Heart right ventricle (tissue), 16 donors: ENCODE measurements at regions of chr6 and their contacts with region 1.

Region 1: DNA sequence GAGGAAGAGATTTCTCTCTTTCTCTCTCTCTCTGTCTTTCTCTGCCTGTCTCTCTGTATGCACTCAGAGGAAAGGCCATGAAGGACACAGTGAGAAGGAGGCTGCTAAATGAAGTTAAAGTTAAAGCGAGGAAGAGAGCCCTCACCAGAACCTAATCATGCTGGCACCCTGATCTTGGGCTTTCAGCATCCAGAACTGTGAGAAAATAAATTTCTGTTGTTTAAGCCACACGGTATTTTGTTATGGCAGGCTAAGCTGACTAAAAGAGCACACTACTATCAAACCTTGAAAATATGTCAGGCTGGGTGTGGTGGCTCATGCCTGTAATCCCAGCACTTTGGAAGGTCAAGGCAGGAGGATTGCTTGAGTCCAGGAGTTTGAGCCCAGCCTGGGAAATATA is 8.0 kb upstream of the TCF21 start:
- DNase-seq: no peak
- ATAC-seq: no peak
- H3K4me3 ChIP-seq: no peak overlapping the region
- H3K27ac ChIP-seq: no peak overlapping the region
- H3K4me1 ChIP-seq: peaks cover 0 to 3% (median 0%) of the 10 kb centered on the region in 9 donors
- H3K27me3 ChIP-seq: peaks cover 0 to 61% (median 30%) of the 10 kb centered on the region in 7 donors
- CTCF ChIP-seq: no peak

Region 2: GRCh38 chr6:133804263-133804662 is 76.6 kb before region 1 on chr6:
- intact Hi-C with region 1: loop called in 1 of 10 experiments (anchors 2 kb)
- DNase-seq: peak in 1 of 2 donors; percentile 12
- ATAC-seq: peak; percentile 53 to 87 (median 70)
- H3K4me3 ChIP-seq: no peak overlapping the region
- H3K27ac ChIP-seq: peak overlapping the region in 1 of 10 donors; percentile 24
- H3K4me1 ChIP-seq: peaks cover 0 to 5% (median 0%) of the 10 kb centered on the region in 9 donors
- H3K27me3 ChIP-seq: no peaks in the 10 kb centered on the region
- CTCF ChIP-seq: no peak

Region 3: DNA sequence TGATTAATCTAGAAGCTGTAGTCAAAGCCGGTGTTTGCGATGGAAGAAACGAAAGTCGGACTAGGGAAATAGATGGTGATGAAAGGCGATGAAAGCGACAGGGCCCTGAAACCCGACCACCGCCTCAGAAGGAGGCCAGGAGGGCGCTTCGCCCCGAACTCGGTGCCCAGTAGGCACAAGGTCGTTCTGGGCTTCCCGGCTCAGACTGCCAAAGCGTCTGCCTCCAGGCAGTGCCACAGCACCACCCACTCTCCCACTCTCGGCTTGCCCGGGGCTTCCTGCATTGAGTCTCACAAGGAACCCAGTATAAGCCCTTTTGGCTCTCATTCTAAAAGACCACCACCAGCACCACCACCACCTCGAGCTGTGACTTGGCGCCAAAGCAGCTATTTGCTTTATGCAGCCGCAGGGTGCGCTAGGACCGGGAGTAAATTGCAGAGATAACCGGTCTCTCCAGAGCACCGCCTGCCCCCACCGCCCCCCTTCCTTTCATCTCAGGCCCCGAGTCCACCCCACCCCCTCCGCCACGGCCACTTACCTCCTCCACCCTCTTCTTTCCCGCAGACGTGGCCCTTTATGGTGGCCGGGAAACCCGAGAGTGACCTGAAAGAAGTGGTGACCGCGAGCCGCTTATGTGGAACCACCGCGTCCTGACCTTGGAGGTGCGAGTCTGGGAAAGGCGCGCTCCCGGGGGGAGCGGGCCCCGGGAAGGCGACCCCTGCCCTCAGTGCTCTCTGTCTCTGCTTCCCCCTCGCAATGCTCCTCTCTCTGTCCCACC is 10.4 kb after region 1 on chr6:
- intact Hi-C with region 1: no loop called
- DNase-seq: peak; percentile 26 to 40
- ATAC-seq: peak in 3 of 8 donors; percentile 6 to 16 (median 15)
- H3K4me3 ChIP-seq: peak overlapping the region; percentile 47 to 66 (median 56)
- H3K27ac ChIP-seq: peak overlapping the region; percentile 53 to 89 (median 85)
- H3K4me1 ChIP-seq: peaks cover 0 to 66% (median 38%) of the 10 kb centered on the region in 9 donors
- H3K27me3 ChIP-seq: peaks cover 0 to 99% (median 89%) of the 10 kb centered on the region in 7 donors
- CTCF ChIP-seq: no peak

Region 4: DNA sequence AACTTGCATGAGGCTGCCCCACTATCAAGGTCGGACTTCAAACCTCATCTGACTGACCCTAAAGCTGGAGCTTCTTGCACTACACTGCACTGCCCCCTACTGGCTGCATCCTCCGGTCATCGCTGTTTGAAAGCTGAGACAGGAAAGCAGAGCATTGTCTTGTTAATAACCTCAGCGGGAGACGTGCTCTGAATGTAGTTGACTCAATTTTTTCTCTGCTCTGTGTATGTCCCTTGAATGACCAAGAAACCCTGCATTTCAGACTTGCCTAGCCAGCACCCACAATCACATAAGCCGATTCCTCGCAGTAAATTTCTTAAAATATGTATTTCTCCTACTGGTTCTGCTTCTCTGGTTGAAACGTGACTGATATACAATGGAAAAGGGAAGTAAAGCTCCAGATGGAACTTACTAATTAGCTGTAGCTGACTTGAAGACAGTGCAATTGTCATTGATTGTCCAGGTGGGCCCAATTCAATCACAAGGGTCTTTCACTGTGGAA is 35.8 kb after region 1 on chr6:
- intact Hi-C with region 1: no loop called
- DNase-seq: peak; percentile 87
- ATAC-seq: peak; percentile 55 to 91 (median 85)
- H3K4me3 ChIP-seq: no peak overlapping the region
- H3K27ac ChIP-seq: no peak overlapping the region
- H3K4me1 ChIP-seq: peaks cover 0 to 11% (median 0%) of the 10 kb centered on the region in 9 donors
- H3K27me3 ChIP-seq: peaks cover 0 to 12% (median 0%) of the 10 kb centered on the region in 7 donors
- CTCF ChIP-seq: peak; percentile 56 to 94 (median 88)